ENCODE measurements at regions of chr22 and their contacts with region 1.

Region 1: GRCh38 chr22:37676736-37677492 is 1.5 kb downstream of the LGALS1 start:
- DNase-seq: peak; percentile 97
- H3K4me3 Mint-ChIP-seq: peak overlapping the region; percentile 92
- H3K27ac Mint-ChIP-seq: peak overlapping the region; percentile 97
- H3K4me1 Mint-ChIP-seq: peaks cover 56% of the 10 kb centered on the region
- H3K27me3 Mint-ChIP-seq: no peaks in the 10 kb centered on the region

Region 2: GRCh38 chr22:36762687-36763260 is 914.1 kb before region 1 on chr22:
- intact Hi-C with region 1: no loop called
- DNase-seq: no peak
- H3K4me3 Mint-ChIP-seq: no peak overlapping the region
- H3K27ac Mint-ChIP-seq: no peak overlapping the region
- H3K4me1 Mint-ChIP-seq: peaks cover 2% of the 10 kb centered on the region
- H3K27me3 Mint-ChIP-seq: no peaks in the 10 kb centered on the region

Region 3: GRCh38 chr22:37244114-37244921 is 432.6 kb before region 1 on chr22 and contains the start of gene RAC2:
- intact Hi-C with region 1: loop called (anchors 1 kb)
- DNase-seq: peak; percentile 95
- H3K4me3 Mint-ChIP-seq: peak within 1 kb of the TSS; percentile 99
- H3K27ac Mint-ChIP-seq: peak within 1 kb of the TSS; percentile 98
- H3K4me1 Mint-ChIP-seq: peaks cover 48% of the 10 kb centered on the region
- H3K27me3 Mint-ChIP-seq: no peaks in the 10 kb centered on the region
- total RNA-seq, gene RAC2: 519 and 540 TPM in 2 replicates

Region 4: GRCh38 chr22:37623075-37624016 is 53.6 kb before region 1 on chr22:
- intact Hi-C with region 1: loop called (anchors 1 kb)
- DNase-seq: peak; percentile 92
- H3K4me3 Mint-ChIP-seq: no peak overlapping the region
- H3K27ac Mint-ChIP-seq: peak overlapping the region; percentile 80
- H3K4me1 Mint-ChIP-seq: peaks cover 17% of the 10 kb centered on the region
- H3K27me3 Mint-ChIP-seq: no peaks in the 10 kb centered on the region

Region 5: DNA sequence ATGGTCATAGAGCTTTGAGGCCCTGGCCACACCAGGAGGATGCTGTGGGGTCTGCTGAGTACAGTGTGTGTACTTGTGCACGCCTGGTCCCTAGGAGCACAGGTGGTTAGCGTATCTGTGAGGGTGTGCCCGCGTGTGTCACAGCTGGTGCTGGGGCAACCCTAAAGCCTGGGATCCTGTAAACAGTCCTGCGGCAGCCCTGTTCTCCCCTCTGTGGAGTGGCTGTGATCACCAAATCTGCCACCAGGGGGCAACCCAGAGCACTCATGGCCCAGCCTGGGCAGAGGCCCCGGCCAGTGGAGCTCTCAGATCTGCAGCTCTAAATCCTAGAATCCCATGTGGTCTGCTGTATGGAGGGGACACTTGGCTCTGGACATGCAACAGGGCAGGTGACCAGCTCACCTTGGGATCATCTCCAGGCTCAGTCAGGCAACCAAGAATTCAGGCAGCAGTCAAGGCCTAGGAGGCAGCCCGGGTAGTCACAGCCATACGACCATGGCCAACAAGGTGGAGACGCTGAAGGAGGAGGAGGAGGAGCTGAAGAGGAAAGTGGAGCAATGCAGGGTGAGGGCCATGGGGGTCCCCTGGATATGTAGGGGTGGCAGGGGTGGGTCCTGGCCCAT is 33.6 kb before region 1 on chr22:
- intact Hi-C with region 1: loop called (anchors 1 kb)
- DNase-seq: peak; percentile 96
- H3K4me3 Mint-ChIP-seq: peak overlapping the region; percentile 63
- H3K27ac Mint-ChIP-seq: peak overlapping the region; percentile 65
- H3K4me1 Mint-ChIP-seq: peaks cover 30% of the 10 kb centered on the region
- H3K27me3 Mint-ChIP-seq: no peaks in the 10 kb centered on the region

Region 6: GRCh38 chr22:37807410-37808293 is 130.7 kb after region 1 on chr22 and contains the start of gene GCAT:
- intact Hi-C with region 1: loop called (anchors 5 kb)
- DNase-seq: peak; percentile 97
- H3K4me3 Mint-ChIP-seq: peak within 1 kb of the TSS; percentile 94
- H3K27ac Mint-ChIP-seq: peak within 1 kb of the TSS; percentile 15
- H3K4me1 Mint-ChIP-seq: peaks cover 36% of the 10 kb centered on the region
- H3K27me3 Mint-ChIP-seq: peaks cover 23% of the 10 kb centered on the region
- total RNA-seq, gene GCAT: 27.7 and 28.9 TPM in 2 replicates

Measured in activated CD4-positive, alpha-beta T cell treated with anti-CD3 and anti-CD28 coated beads, Interleukin-2, amount 10 ng/mL, durations not matched to agents 24 days and 14 days (primary cell).